ENCODE measurements at regions of chr16 and their contacts with region 1.

Region 1: GRCh38 chr16:88941913-88942909 is 34.8 kb downstream of the CBFA2T3 start:
- DNase-seq: no peak
- H3K4me3 ChIP-seq: no peak overlapping the region
- H3K27ac ChIP-seq: no peak overlapping the region
- H3K4me1 ChIP-seq: no peaks in the 10 kb centered on the region
- H3K27me3 ChIP-seq: peaks cover 26 to 32% of the 10 kb centered on the region in 2 experiments
- CTCF ChIP-seq: peak; percentile 55 to 67
- POLR2A ChIP-seq: no peak

Region 2: GRCh38 chr16:88925101-88925887 is 16.9 kb before region 1 on chr16:
- CTCF ChIA-PET with region 1: no interaction called
- POLR2A ChIA-PET with region 1: no interaction called
- dilution Hi-C with region 1: no loop called
- intact Hi-C with region 1: loop called (anchors 2 kb)
- DNase-seq: peak; percentile 67
- H3K4me3 ChIP-seq: no peak overlapping the region
- H3K27ac ChIP-seq: no peak overlapping the region
- H3K4me1 ChIP-seq: peaks cover 27% of the 10 kb centered on the region
- H3K27me3 ChIP-seq: no peaks in the 10 kb centered on the region
- CTCF ChIP-seq: peak; percentile 62 to 64
- POLR2A ChIP-seq: peak; percentile 24

Region 3: GRCh38 chr16:89093602-89094251 is 151.5 kb after region 1 on chr16 and contains the start of gene ACSF3:
- CTCF ChIA-PET with region 1: no interaction called
- POLR2A ChIA-PET with region 1: no interaction called
- dilution Hi-C with region 1: no loop called
- intact Hi-C with region 1: loop called (anchors 1 kb)
- DNase-seq: peak; percentile 26
- H3K4me3 ChIP-seq: peak within 1 kb of the TSS; percentile 78 to 97 (median 90)
- H3K27ac ChIP-seq: peak within 1 kb of the TSS; percentile 50
- H3K4me1 ChIP-seq: peaks cover 8% of the 10 kb centered on the region
- H3K27me3 ChIP-seq: peaks cover 7 to 10% of the 10 kb centered on the region in 2 experiments
- CTCF ChIP-seq: no peak
- POLR2A ChIP-seq: peak; percentile 68
- total RNA-seq, gene ACSF3: 32.7 and 33.2 TPM in 2 replicates

Region 4: DNA sequence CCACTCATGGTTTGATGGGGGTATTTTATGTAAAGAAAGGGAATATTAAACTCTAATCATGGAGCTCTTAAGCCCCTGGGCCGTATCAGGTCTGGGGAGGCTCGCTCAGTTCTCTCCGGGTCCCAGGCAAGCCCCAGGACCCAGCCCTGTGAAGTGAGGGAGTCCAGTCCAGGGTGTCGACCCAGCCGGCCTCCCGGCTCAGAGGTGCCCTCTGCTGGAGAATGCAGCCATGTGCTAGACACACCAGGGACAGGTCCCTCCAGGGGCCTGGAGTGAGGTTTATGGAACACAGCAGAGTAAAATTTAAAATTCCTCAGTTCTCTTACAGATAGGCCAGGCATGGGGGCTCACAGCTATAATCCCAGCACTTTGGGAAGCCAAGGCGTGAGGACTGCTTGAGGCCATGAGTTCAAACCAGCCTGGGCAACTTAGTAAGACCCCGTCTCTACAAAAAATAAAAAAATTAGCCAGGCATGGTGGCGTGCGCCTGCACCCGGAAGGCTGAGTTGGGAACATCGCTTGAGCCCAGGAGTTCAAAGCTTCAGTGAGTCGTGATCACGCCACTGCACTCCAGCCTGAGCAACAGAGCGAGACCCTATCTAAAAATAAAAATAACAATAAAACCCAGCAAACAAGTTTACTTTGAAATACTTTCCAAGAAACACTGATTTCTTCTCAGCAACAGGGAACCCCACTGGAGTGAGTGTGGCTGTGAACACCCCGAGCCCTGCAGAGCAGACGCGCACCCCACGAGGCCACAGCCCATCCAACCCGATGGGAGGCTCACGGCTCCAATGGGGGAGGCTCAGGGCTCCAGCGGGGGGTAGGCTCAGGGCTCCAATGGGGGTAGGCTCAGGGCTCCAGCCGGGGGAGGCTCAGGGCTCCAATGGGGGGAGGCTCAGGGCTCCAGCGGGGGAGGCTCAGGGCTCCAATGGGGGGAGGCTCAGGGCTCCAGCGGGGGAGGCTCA is 347.5 kb after region 1 on chr16:
- CTCF ChIA-PET with region 1: no interaction called
- POLR2A ChIA-PET with region 1: no interaction called
- dilution Hi-C with region 1: no loop called
- intact Hi-C with region 1: loop called (anchors 5 kb)
- DNase-seq: peak; percentile 58
- H3K4me3 ChIP-seq: no peak overlapping the region
- H3K27ac ChIP-seq: no peak overlapping the region
- H3K4me1 ChIP-seq: no peaks in the 10 kb centered on the region
- H3K27me3 ChIP-seq: no peaks in the 10 kb centered on the region
- CTCF ChIP-seq: peak; percentile 90 to 91
- POLR2A ChIP-seq: no peak

Region 5: DNA sequence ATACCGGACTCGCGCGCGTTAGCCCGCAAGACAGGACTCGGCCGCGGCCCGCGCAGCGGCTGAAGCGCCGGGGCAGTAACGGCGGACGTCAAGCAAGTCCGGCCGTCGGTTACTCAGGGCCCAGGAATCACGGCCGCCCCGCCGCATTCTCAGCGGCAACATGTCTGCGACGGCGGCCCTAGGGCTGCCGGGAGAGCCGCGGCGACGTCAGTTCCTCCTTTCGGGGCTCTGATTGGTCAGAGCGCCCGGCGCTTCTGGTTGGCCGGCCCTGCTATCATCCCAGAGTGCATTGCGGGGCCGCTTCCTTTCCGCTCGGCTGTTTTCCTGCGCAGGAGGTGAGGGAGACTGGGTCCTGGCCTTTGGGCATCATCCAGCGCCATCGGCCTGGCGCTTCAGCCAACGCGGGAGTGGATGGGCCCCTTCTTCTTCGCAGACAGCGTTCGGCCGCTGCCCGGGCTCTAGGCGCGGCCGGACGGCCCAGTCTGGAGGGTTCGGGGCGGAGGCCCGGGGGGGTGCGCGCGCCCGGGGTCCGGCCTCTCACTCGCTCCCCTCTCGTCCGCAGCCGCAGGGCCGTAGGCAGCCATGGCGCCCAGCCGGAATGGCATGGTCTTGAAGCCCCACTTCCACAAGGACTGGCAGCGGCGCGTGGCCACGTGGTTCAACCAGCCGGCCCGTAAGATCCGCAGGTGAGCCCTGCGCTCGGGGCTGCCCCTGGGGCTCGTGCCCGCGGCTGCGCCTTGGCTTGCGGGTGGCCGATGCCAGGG is 618.3 kb after region 1 on chr16 and contains the start of gene RPL13:
- CTCF ChIA-PET with region 1: no interaction called
- POLR2A ChIA-PET with region 1: no interaction called
- dilution Hi-C with region 1: no loop called
- intact Hi-C with region 1: no loop called
- DNase-seq: peak; percentile 94
- H3K4me3 ChIP-seq: peak within 1 kb of the TSS; percentile 76 to 90 (median 88)
- H3K27ac ChIP-seq: peak within 1 kb of the TSS; percentile 97
- H3K4me1 ChIP-seq: peaks cover 41% of the 10 kb centered on the region
- H3K27me3 ChIP-seq: no peaks in the 10 kb centered on the region
- CTCF ChIP-seq: peak in 1 of 2 donors; percentile 16
- POLR2A ChIP-seq: peak; percentile 99
- total RNA-seq, gene RPL13: 1,463 and 1,769 TPM in 2 replicates

Measured in endothelial cell of umbilical vein (primary cell).